Activated B cell treated with CpG ODN at 0.5 μM for 24 hours (primary cell): ENCODE measurements at regions of chr6 and their contacts with region 1.

Region 1: DNA sequence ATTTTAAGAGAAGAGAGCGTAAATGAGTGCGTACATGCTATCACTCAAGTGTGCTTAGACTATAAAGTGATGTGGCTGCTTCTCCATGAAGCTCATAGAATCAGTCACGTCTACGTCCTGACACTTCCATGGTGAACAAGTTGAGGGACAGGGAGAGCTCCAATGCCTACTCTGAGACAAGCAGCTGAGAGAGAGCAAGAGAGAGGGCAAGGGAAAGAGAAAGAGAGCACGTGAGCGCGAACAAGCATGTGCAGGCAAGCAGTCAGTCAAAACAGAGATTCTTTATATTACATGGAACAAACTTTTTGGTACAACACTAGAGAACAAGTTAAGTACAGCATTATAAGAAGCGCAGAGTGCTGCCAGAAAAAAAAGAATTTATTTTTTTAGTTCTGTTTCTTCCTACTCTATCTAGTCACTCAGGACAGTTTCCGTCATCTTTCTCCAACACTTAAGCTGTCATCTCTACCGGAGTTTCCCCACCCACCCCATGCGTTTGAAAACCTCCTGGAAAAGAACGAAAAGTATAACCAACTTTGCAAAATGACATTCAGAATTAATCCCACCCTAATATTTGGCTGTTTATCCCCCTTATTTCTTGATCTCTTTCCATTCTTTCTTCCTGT is 61.8 kb downstream of the EPB41L2 start:
- DNase-seq: no peak
- ATAC-seq: no peak
- H3K4me3 Mint-ChIP-seq: no peak overlapping the region
- H3K27ac Mint-ChIP-seq: no peak overlapping the region
- H3K4me1 Mint-ChIP-seq: peaks cover 26% of the 10 kb centered on the region
- H3K27me3 Mint-ChIP-seq: no peaks in the 10 kb centered on the region
- CTCF ChIP-seq: no peak

Region 2: DNA sequence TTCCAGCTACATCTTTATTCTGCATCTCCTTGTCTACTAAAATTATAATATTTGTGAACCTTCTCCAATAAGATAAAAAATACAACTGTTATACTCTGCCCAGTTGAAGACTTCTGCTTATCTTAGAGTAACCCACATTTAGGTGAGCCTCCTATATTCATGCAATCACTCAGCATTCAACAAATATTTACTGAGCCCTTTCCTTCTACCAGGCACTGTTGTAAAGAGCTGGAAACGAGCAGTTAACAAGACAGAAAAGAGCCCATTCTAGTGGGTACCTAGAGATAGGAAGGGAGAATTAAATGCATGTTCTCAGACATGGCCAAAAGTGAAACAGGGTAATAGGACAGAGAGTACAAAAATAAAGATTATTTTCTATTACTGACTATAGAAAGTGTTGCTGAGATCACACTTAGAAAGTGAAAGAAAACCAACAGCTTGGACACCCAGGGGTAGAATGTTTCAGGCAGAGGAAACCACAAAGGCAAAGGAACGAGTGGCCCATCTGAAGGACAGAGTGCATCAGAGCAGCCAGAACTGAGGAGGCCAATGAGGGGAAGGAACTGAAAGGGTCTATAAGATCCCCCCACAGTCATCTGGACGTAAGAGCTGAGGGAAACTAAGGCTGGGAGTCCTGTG is 224.8 kb before region 1 on chr6:
- CTCF ChIA-PET with region 1: no interaction called
- POLR2A ChIA-PET with region 1: no interaction called
- intact Hi-C with region 1: no loop called
- DNase-seq: no peak
- ATAC-seq: no peak
- H3K4me3 Mint-ChIP-seq: no peak overlapping the region
- H3K27ac Mint-ChIP-seq: no peak overlapping the region
- H3K4me1 Mint-ChIP-seq: no peaks in the 10 kb centered on the region
- H3K27me3 Mint-ChIP-seq: peaks cover 2% of the 10 kb centered on the region
- CTCF ChIP-seq: no peak

Region 3: DNA sequence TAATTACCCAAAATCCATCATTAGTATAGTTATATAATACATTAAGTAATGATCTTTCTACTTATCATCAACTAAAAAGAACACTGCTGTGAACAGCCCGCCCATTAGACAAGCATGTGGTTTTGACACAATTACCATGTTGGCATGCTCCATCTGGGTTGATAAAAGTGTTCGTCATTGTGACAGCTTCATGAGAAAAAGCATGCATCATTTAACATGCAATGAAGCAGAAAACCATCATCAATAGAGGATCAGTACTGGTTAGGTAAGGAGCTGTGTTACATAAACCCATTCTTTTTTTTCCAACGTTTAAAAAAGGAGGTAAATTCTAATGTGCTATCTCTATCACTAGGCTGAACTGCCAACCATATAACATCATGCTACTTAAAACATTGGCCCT is 40.1 kb before region 1 on chr6:
- CTCF ChIA-PET with region 1: no interaction called
- POLR2A ChIA-PET with region 1: no interaction called
- intact Hi-C with region 1: loop called (anchors 10 kb)
- DNase-seq: no peak
- ATAC-seq: no peak
- H3K4me3 Mint-ChIP-seq: no peak overlapping the region
- H3K27ac Mint-ChIP-seq: no peak overlapping the region
- H3K4me1 Mint-ChIP-seq: peaks cover 47% of the 10 kb centered on the region
- H3K27me3 Mint-ChIP-seq: no peaks in the 10 kb centered on the region
- CTCF ChIP-seq: no peak

Region 4: DNA sequence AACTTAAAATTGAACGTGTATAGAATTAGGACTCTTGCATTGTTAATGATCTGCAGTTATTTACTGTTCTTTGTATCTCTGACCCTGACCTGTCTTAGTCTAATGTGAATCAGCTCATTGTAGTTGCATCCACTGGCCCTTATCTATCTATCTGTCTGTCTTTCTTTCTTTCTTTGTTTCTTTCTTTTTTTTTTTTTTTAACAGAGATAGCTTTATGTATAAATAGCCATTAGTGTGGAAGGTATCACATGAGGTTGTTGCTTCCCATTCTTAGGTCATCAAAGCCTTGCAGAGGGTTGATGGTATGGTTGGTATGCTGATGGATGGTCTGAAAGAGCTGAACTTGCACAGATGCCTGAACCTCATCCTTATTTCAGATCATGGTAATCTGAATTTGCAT is 866.5 kb after region 1 on chr6:
- CTCF ChIA-PET with region 1: no interaction called
- POLR2A ChIA-PET with region 1: no interaction called
- intact Hi-C with region 1: no loop called
- DNase-seq: no peak
- ATAC-seq: no peak
- H3K4me3 Mint-ChIP-seq: no peak overlapping the region
- H3K27ac Mint-ChIP-seq: no peak overlapping the region
- H3K4me1 Mint-ChIP-seq: no peaks in the 10 kb centered on the region
- H3K27me3 Mint-ChIP-seq: no peaks in the 10 kb centered on the region
- CTCF ChIP-seq: no peak